Activated T-helper 1 cell treated with anti-CD3 and anti-CD28 coated beads, Interleukin-12 subunit alpha, Interleukin-12 subunit beta, Interleukin-2, Interleukin-4 antibody, amounts not matched to agents 30 ng/mL and 10 ng/mL and 1 ng/mL, durations not matched to agents 14 hours and 24 hours and 36 hours (primary cell): ENCODE measurements at regions of chr10 and their contacts with region 1.

Region 1: GRCh38 chr10:11631890-11632587 is 20.6 kb upstream of the USP6NL start:
- DNase-seq: peak; percentile 27
- H3K4me3 Mint-ChIP-seq: peak overlapping the region; percentile 24
- H3K27ac Mint-ChIP-seq: peak overlapping the region; percentile 59
- H3K4me1 Mint-ChIP-seq: peaks cover 19% of the 10 kb centered on the region
- H3K27me3 Mint-ChIP-seq: peaks cover 39% of the 10 kb centered on the region

Region 2: GRCh38 chr10:11560076-11560709 is 71.8 kb before region 1 on chr10:
- intact Hi-C with region 1: no loop called
- DNase-seq: no peak
- H3K4me3 Mint-ChIP-seq: no peak overlapping the region
- H3K27ac Mint-ChIP-seq: no peak overlapping the region
- H3K4me1 Mint-ChIP-seq: peaks cover 12% of the 10 kb centered on the region
- H3K27me3 Mint-ChIP-seq: peaks cover 17% of the 10 kb centered on the region

Region 3: GRCh38 chr10:11578802-11579255 is 53.2 kb before region 1 on chr10:
- intact Hi-C with region 1: loop called (anchors 2 kb)
- DNase-seq: no peak
- H3K4me3 Mint-ChIP-seq: no peak overlapping the region
- H3K27ac Mint-ChIP-seq: no peak overlapping the region
- H3K4me1 Mint-ChIP-seq: peaks cover 22% of the 10 kb centered on the region
- H3K27me3 Mint-ChIP-seq: peaks cover 11% of the 10 kb centered on the region

Region 4: GRCh38 chr10:11611248-11612020 is 20.6 kb before region 1 on chr10 and contains the start of gene USP6NL:
- intact Hi-C with region 1: loop called (anchors 2 kb)
- DNase-seq: peak; percentile 48
- H3K4me3 Mint-ChIP-seq: peak within 1 kb of the TSS; percentile 89
- H3K27ac Mint-ChIP-seq: peak within 1 kb of the TSS; percentile 52
- H3K4me1 Mint-ChIP-seq: peaks cover 27% of the 10 kb centered on the region
- H3K27me3 Mint-ChIP-seq: peaks cover 44% of the 10 kb centered on the region
- total RNA-seq, gene USP6NL: 0.64 and 0.78 TPM in 2 replicates

Region 5: GRCh38 chr10:11684717-11685645 is 52.9 kb after region 1 on chr10:
- intact Hi-C with region 1: loop called (anchors 2 kb)
- DNase-seq: peak; percentile 39
- H3K4me3 Mint-ChIP-seq: peak overlapping the region; percentile 76
- H3K27ac Mint-ChIP-seq: peak overlapping the region; percentile 84
- H3K4me1 Mint-ChIP-seq: peaks cover 25% of the 10 kb centered on the region
- H3K27me3 Mint-ChIP-seq: peaks cover 53% of the 10 kb centered on the region

Region 6: DNA sequence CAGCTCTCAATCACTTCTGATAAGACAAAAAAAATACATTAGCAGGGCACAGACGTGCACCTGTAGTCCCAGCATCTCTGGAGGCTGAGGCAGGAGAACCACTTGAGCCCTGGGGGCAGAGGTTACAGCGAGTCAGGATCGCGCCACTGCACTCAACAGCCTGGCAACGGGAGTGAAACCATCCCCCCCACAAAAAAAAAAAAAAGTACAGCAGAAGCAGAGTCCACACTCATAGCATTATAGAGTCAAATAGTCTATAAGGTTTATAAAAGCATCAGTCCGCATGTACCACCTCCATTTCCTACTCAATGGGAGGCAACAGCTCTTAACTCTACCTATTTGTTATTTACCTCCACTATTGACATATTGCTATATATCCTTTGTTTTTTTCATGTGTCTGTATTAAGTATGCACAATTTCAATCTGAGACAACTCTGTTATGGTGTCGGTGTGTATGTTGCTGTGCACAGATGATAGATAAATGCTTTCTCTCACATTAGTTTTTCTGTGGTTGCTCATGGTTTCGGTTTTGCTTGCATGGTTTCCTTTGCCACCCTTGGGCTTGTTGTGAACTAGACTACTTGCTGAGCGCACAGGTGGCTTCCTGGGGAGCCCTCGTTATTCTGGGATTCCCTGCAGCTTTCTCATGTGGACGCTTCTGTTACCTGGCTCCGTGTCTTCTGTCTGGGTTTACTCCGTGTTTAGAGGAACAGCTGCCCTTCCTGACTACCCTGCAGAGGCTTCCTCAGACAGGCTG is 231.5 kb after region 1 on chr10:
- intact Hi-C with region 1: loop called (anchors 1 kb)
- DNase-seq: peak; percentile 74
- H3K4me3 Mint-ChIP-seq: peak overlapping the region; percentile 41
- H3K27ac Mint-ChIP-seq: peak overlapping the region; percentile 52
- H3K4me1 Mint-ChIP-seq: peaks cover 20% of the 10 kb centered on the region
- H3K27me3 Mint-ChIP-seq: peaks cover 70% of the 10 kb centered on the region